ENCODE measurements at regions of chr6 and their contacts with region 1.

Region 1: DNA sequence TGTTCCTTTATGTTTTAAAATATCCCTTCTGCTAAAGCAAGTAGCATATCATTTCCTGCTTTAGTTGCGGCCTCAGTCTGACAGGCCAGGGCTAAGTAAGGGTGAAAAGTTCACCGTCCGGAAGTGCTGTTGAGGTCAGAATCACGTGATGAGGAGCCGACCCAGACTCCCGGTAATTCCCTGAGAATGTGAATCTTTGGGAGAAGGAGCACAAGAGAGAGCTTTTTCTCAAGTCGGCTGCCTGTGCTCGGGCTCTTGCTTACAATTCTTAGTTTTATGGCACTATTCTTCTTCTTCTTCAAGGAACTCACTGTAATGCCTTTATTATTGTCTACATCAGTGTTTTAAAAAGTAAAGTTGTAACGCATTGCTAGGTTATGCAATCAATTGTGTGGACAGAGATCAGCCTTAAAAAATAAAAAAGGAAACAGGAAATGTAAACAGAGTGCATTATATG is 309.3 kb downstream of the PRL start:
- DNase-seq: no peak
- H3K4me3 Mint-ChIP-seq: peak overlapping the region; percentile 30
- H3K27ac Mint-ChIP-seq: peak overlapping the region; percentile 17
- H3K4me1 Mint-ChIP-seq: peaks cover 25% of the 10 kb centered on the region
- H3K27me3 Mint-ChIP-seq: no peaks in the 10 kb centered on the region

Region 2: GRCh38 chr6:21953831-21954801 is 33.4 kb before region 1 on chr6:
- intact Hi-C with region 1: loop called (anchors 5 kb)
- DNase-seq: no peak
- H3K4me3 Mint-ChIP-seq: no peak overlapping the region
- H3K27ac Mint-ChIP-seq: peak overlapping the region; percentile 12
- H3K4me1 Mint-ChIP-seq: peaks cover 26% of the 10 kb centered on the region
- H3K27me3 Mint-ChIP-seq: no peaks in the 10 kb centered on the region

Region 3: GRCh38 chr6:22025468-22026160 is 38.1 kb after region 1 on chr6:
- intact Hi-C with region 1: loop called (anchors 5 kb)
- DNase-seq: peak; percentile 13
- H3K4me3 Mint-ChIP-seq: peak overlapping the region; percentile 43
- H3K27ac Mint-ChIP-seq: peak overlapping the region; percentile 78
- H3K4me1 Mint-ChIP-seq: peaks cover 39% of the 10 kb centered on the region
- H3K27me3 Mint-ChIP-seq: no peaks in the 10 kb centered on the region

Measured in activated T-helper 2 cell treated with anti-CD3 and anti-CD28 coated beads, Interferon-gamma antibody, Interleukin-2, Interleukin-4, amounts not matched to agents 10 μg/mL and 5 μg/mL and 100 μg/mL, durations not matched to agents 14 hours and 24 hours and 36 hours (primary cell).